GM12878 (cell line): ENCODE measurements at regions of chr6 and their contacts with region 1.

Region 1: DNA sequence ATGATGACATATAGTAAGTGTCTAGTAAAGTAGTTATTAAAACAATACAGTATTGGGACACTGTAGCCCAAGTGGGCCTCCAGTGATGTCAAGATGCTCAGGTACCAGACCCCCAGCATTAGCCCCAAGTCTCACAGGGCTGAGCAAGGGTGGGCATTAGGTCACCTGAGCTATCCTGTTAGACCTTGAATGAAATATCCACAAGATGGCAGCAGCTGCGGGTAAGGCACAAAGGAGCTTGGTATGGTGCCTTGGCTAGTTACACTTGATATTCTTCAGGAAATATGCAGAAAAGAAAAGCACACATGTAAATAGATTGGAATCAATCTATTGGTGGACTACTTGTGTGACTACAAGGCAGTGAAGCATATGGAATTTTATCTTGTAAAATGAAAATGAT is 701.8 kb upstream of the ADGRB3 start:
- DNase-seq: no peak
- ATAC-seq: peak; percentile 88
- H3K4me3 ChIP-seq: no peak overlapping the region
- H3K27ac ChIP-seq: no peak overlapping the region
- H3K4me1 ChIP-seq: no peaks in the 10 kb centered on the region
- H3K27me3 ChIP-seq: no peaks in the 10 kb centered on the region
- CTCF ChIP-seq: peak; percentile 21 to 41 (median 32); a peak in 4 of 6 replicates
- EP300 ChIP-seq: no peak
- POLR2A ChIP-seq: no peak
- RAD21 ChIP-seq: peak; percentile 68

Region 2: DNA sequence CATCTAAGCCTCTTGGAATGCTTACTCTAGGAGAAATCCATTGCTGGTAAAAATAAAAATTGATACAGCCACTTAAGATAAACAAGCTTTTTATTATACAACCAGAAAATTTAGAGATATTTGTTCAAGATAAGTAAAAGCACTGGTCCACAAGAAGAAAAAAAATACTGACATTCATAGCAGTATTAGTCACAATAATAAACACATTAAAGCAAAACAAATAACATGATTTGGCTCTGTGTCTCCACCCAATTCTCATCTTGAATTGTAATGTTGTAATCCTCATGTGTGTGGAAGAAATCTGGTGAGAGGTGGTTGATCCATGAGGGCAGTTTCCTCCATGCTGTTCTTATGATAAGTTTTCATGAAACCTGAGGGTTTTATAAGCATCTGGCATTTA is 391.7 kb before region 1 on chr6:
- CTCF ChIA-PET with region 1: no interaction called
- POLR2A ChIA-PET with region 1: no interaction called
- RAD21 ChIA-PET with region 1: no interaction called
- SMC1A ChIA-PET with region 1: no interaction called
- in situ Hi-C with region 1: no loop called
- intact Hi-C with region 1: no loop called
- DNase-seq: no peak
- ATAC-seq: no peak
- H3K4me3 ChIP-seq: no peak overlapping the region
- H3K27ac ChIP-seq: no peak overlapping the region
- H3K4me1 ChIP-seq: no peaks in the 10 kb centered on the region
- H3K27me3 ChIP-seq: no peaks in the 10 kb centered on the region
- CTCF ChIP-seq: no peak
- EP300 ChIP-seq: no peak
- POLR2A ChIP-seq: no peak
- RAD21 ChIP-seq: no peak

Region 3: GRCh38 chr6:67811239-67812037 is 121.8 kb before region 1 on chr6:
- CTCF ChIA-PET with region 1: no interaction called
- POLR2A ChIA-PET with region 1: no interaction called
- RAD21 ChIA-PET with region 1: no interaction called
- SMC1A ChIA-PET with region 1: no interaction called
- in situ Hi-C with region 1: no loop called
- intact Hi-C with region 1: no loop called
- DNase-seq: no peak
- ATAC-seq: no peak
- H3K4me3 ChIP-seq: no peak overlapping the region
- H3K27ac ChIP-seq: no peak overlapping the region
- H3K4me1 ChIP-seq: no peaks in the 10 kb centered on the region
- H3K27me3 ChIP-seq: no peaks in the 10 kb centered on the region
- CTCF ChIP-seq: no peak
- EP300 ChIP-seq: no peak
- POLR2A ChIP-seq: no peak
- RAD21 ChIP-seq: no peak

Region 4: GRCh38 chr6:68196645-68197044 is 263.4 kb after region 1 on chr6:
- CTCF ChIA-PET with region 1: interaction called, 10 read pairs
- POLR2A ChIA-PET with region 1: no interaction called
- RAD21 ChIA-PET with region 1: interaction called, 5 read pairs
- SMC1A ChIA-PET with region 1: interaction called, 7 read pairs
- in situ Hi-C with region 1: no loop called
- intact Hi-C with region 1: loop called (anchors 1 kb)
- DNase-seq: no peak
- ATAC-seq: peak; percentile 75
- H3K4me3 ChIP-seq: no peak overlapping the region
- H3K27ac ChIP-seq: no peak overlapping the region
- H3K4me1 ChIP-seq: no peaks in the 10 kb centered on the region
- H3K27me3 ChIP-seq: no peaks in the 10 kb centered on the region
- CTCF ChIP-seq: peak; percentile 41 to 45 (median 43); a peak in 5 of 6 replicates
- EP300 ChIP-seq: no peak
- POLR2A ChIP-seq: no peak
- RAD21 ChIP-seq: peak; percentile 87

Region 5: GRCh38 chr6:68313911-68314310 is 380.6 kb after region 1 on chr6:
- CTCF ChIA-PET with region 1: interaction called, 6 read pairs
- POLR2A ChIA-PET with region 1: no interaction called
- RAD21 ChIA-PET with region 1: interaction called, 7 read pairs
- SMC1A ChIA-PET with region 1: interaction called, 8 read pairs
- in situ Hi-C with region 1: no loop called
- intact Hi-C with region 1: loop called (anchors 2 kb)
- DNase-seq: no peak
- ATAC-seq: no peak
- H3K4me3 ChIP-seq: no peak overlapping the region
- H3K27ac ChIP-seq: no peak overlapping the region
- H3K4me1 ChIP-seq: no peaks in the 10 kb centered on the region
- H3K27me3 ChIP-seq: no peaks in the 10 kb centered on the region
- CTCF ChIP-seq: peak; percentile 5 to 37 (median 17); a peak in 2 of 6 replicates
- EP300 ChIP-seq: no peak
- POLR2A ChIP-seq: no peak
- RAD21 ChIP-seq: peak; percentile 73